MCF 10A (cell line): ENCODE measurements at regions of chr1 and their contacts with region 1.

Region 1: DNA sequence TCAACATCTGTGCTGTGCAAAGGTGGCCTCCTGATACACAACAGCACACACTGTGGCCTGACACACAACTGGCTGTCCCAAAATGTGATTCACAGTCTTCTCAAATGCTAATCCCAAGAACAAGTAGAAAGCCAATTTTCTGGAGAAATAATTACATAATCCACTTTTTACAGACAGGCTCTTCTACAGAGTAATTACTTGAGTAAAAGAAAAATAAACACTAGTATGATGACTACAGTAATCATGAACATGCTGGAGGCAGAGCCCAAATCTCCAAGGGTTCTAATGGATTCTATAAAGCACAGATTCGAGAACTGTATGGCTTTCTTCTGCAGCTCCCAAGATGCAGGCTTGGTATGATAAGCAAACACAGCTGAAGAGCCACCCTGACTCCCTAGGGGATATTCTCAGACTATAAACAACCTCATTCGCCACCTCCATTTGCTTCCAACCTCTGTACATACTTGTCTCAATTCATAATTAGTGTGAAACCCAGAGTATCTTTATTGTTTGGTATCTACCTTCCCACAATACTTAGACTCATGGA is 81.9 kb downstream of the SIPA1L2 start:
- DNase-seq: no peak
- H3K4me3 Mint-ChIP-seq: no peak overlapping the region
- H3K27ac Mint-ChIP-seq: no peak overlapping the region
- H3K4me1 Mint-ChIP-seq: peaks cover 30% of the 10 kb centered on the region
- H3K27me3 Mint-ChIP-seq: no peaks in the 10 kb centered on the region
- CTCF ChIP-seq: no peak

Region 2: GRCh38 chr1:232558954-232559353 is 10.9 kb after region 1 on chr1:
- CTCF ChIA-PET with region 1: interaction called, 5 read pairs
- POLR2A ChIA-PET with region 1: interaction called, 15 read pairs
- intact Hi-C with region 1: no loop called
- DNase-seq: no peak
- H3K4me3 Mint-ChIP-seq: no peak overlapping the region
- H3K27ac Mint-ChIP-seq: no peak overlapping the region
- H3K4me1 Mint-ChIP-seq: peaks cover 15% of the 10 kb centered on the region
- H3K27me3 Mint-ChIP-seq: no peaks in the 10 kb centered on the region
- CTCF ChIP-seq: no peak